Heart right ventricle (tissue), 16 donors: ENCODE measurements at regions of chr3 and their contacts with region 1.

Region 1: DNA sequence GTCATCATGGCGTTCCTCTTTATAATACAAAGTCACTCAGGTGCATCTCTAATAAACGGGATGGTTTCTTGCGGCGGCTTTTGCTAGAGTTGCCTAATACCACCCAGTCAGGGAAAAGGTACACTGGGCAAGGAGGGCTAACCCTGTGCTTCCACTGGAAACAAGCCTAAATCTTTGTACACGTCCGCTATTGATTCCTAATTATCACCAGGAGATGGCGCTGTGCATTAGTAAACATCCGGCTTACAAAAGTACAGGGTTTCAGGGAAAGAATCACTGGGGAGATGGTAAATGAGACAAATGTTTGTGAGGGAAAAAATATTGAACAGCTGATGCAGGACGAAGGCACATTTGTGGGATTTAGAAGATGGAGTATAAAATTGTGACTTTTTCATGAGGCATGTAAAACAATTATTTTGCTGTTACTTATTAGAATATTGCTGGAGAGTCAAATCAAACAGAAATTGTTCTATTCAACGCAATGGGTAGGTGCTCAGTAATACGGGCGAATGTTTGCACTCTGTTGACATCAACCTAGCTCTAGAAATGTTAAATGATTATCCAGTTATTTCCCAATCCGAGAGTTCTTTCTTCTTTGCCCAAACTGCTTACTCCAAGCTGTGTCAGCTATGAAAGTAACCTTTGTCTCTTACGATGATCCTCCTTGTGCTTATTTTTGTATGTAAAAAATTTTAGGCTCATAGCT is 50.6 kb downstream of the GMNC start:
- DNase-seq: peak in 1 of 2 donors; percentile 23
- ATAC-seq: no peak
- H3K4me3 ChIP-seq: no peak overlapping the region
- H3K27ac ChIP-seq: no peak overlapping the region
- H3K4me1 ChIP-seq: peaks cover 0 to 12% (median 3%) of the 10 kb centered on the region in 9 donors
- H3K27me3 ChIP-seq: no peaks in the 10 kb centered on the region
- CTCF ChIP-seq: peak; percentile 23 to 63 (median 57)

Region 2: DNA sequence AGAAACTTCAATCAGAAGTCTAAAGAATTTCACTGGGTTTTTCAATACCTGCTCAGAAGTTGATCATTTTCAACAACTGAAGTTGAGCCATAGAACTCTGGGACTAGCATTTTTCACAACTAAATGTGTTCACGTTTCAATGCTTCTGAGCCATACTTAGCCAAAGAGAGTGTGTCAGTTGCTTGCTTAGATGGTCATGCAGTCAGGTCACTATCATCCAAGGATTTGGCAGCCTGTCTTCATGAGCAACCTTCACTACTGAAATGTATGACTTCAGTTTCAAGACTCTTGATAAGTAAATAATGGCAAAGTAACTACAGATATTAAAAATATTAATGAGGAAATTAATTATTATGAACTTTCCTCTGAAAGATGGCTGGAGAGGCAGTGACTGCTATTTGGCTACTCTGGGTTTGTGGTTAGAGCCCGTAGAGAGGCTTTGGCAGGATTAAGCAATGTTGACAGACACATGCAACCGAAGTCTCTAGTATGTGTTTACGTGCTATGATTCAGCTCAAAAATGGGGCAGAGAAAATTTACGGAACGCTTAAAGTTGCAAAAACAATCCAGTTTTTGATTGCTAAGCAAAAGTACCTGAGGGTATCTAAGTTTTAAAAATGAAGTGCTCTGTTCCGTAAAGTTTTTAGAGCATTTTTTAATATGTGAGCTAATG is 83.2 kb before region 1 on chr3:
- intact Hi-C with region 1: no loop called
- DNase-seq: no peak
- ATAC-seq: no peak
- H3K4me3 ChIP-seq: no peak overlapping the region
- H3K27ac ChIP-seq: no peak overlapping the region
- H3K4me1 ChIP-seq: no peaks in the 10 kb centered on the region
- H3K27me3 ChIP-seq: no peaks in the 10 kb centered on the region
- CTCF ChIP-seq: no peak

Region 3: DNA sequence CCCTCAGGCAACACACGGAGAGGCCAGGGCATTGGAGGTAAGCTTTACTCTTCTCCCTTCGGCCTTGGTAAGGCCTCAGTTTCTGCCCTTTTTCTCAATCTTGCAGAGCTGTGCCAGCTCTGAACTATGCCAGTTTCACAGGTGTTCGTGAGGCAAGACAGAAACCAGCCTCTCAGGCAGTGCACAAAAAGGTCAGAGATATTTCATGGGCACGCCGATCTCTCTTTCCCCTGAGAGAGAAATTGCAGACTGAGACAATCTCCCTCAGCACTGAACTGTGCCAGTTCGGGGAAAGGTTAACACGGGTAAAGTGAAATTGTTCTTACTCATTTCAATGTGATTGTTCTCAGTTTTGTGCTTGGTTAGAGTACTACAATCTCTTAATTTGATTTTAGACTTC is 38.0 kb before region 1 on chr3:
- intact Hi-C with region 1: loop called in 2 of 10 experiments (anchors 5 kb)
- DNase-seq: peak in 1 of 2 donors; percentile 41
- ATAC-seq: peak; percentile 77 to 99 (median 98)
- H3K4me3 ChIP-seq: no peak overlapping the region
- H3K27ac ChIP-seq: peak overlapping the region; percentile 5 to 79 (median 72)
- H3K4me1 ChIP-seq: peaks cover 0 to 3% (median 0%) of the 10 kb centered on the region in 9 donors
- H3K27me3 ChIP-seq: no peaks in the 10 kb centered on the region
- CTCF ChIP-seq: no peak

Region 4: DNA sequence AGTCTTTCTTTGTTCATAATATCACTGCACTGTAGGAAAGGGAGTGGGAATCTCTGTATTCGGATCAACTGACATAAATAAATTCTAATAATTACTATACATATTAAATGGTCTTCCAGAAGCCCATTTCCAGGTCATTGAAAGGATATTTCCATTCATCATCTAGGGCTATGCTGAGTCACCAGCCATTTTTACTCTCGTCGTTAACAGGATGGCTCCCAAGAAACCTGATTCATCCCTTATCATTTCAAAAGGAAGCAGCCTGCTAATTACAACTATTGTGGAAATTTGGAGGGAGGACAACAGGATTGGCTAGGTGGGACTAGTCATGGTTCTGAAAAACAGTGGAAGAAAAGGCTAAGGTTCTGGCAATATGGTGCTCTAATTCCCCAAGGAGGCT is 36.9 kb after region 1 on chr3:
- intact Hi-C with region 1: no loop called
- DNase-seq: no peak
- ATAC-seq: no peak
- H3K4me3 ChIP-seq: no peak overlapping the region
- H3K27ac ChIP-seq: no peak overlapping the region
- H3K4me1 ChIP-seq: no peaks in the 10 kb centered on the region
- H3K27me3 ChIP-seq: peaks cover 0 to 8% (median 0%) of the 10 kb centered on the region in 7 donors
- CTCF ChIP-seq: no peak

Region 5: DNA sequence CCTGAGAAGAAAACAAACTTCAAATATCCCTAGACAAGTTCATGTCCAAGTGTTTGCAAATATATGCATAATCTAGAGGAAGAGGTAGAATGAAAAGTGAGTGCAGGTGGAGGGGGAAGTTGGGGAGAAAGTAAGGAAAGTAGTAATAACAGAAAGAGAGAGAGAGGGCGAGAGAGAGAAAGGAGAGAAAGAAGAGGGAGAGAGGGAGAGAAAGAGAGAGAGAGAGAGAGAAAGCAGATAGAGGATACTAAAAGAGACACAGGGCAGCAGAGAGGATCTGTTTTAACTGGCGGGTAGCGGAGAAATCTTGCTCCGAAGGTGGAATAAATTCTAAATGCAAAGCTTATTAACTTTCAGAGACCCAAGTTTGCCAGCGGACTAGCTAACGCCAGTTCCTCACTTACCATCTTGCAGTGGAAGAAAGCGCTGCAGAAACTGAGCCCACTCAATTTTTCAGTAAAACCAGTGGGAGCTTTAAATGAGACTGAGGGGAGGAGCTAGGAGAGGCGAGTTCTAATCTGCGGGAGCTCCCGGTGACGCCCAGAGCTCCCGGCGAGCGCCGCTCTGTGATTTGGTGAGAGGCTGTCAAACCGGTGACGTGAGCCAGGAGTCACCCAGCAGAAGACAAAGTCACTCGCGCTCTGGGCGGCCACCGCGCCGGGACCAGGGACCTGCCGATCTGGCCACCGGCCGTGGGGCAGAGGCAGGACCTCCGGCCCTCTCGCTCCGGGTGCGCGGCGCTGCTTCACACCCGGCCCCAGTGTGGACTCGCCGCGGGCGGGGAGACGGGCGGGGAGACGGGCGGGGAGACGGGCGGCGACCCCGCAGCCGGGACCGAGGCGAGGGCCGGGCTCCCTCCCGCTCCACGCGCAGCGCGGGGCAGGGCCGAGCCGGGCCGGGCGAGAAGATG is 50.5 kb after region 1 on chr3 and contains the start of gene GMNC:
- intact Hi-C with region 1: loop called in 2 of 10 experiments (anchors 5 kb)
- DNase-seq: peak; percentile 78 to 86
- ATAC-seq: peak; percentile 95 to 98 (median 97)
- H3K4me3 ChIP-seq: peak within 1 kb of the TSS; percentile 33 to 85 (median 62)
- H3K27ac ChIP-seq: peak within 1 kb of the TSS; percentile 63 to 91 (median 82)
- H3K4me1 ChIP-seq: peaks cover 0 to 5% (median 0%) of the 10 kb centered on the region in 9 donors
- H3K27me3 ChIP-seq: peaks cover 0 to 40% (median 0%) of the 10 kb centered on the region in 7 donors
- CTCF ChIP-seq: peak in 1 of 9 donors; percentile 4
- total RNA-seq, gene GMNC: 0.24 to 3.7 (median 0.64) TPM in 9 of 10 donors, not detected in the other

Region 6: DNA sequence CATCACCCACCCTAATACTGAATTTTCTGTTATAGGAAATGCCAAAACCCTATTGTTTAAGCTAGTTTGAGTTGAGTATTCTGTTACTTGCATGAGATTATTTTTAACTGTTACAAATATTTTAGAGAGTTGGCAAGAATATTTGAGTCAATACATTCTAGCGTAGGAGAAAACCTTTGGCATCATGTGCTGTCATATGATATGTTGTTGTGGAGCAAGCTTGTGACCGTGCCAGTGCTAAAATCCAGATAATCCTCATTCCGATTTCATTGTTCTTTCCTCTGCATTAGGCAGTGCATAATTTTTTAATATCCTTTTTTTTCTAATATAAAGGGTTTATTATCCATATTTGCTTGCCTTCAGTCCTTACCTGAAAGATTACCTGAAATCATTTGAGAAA is 218.6 kb after region 1 on chr3:
- intact Hi-C with region 1: loop called in 1 of 10 experiments (anchors 10 kb)
- DNase-seq: no peak
- ATAC-seq: no peak
- H3K4me3 ChIP-seq: no peak overlapping the region
- H3K27ac ChIP-seq: no peak overlapping the region
- H3K4me1 ChIP-seq: peaks cover 0 to 6% (median 0%) of the 10 kb centered on the region in 9 donors
- H3K27me3 ChIP-seq: no peaks in the 10 kb centered on the region
- CTCF ChIP-seq: no peak

Region 7: GRCh38 chr3:191051037-191051436 is 239.1 kb after region 1 on chr3:
- intact Hi-C with region 1: loop called in 7 of 10 experiments (anchors 2 to 5 kb)
- DNase-seq: no peak
- ATAC-seq: no peak
- H3K4me3 ChIP-seq: no peak overlapping the region
- H3K27ac ChIP-seq: no peak overlapping the region
- H3K4me1 ChIP-seq: no peaks in the 10 kb centered on the region
- H3K27me3 ChIP-seq: no peaks in the 10 kb centered on the region
- CTCF ChIP-seq: peak in 7 of 9 donors; percentile 39 to 66 (median 53)